Activated CD8-positive, alpha-beta T cell treated with anti-CD3 and anti-CD28 coated beads for 36 hours (primary cell): ENCODE measurements at regions of chr4 and their contacts with region 1.

Region 1: DNA sequence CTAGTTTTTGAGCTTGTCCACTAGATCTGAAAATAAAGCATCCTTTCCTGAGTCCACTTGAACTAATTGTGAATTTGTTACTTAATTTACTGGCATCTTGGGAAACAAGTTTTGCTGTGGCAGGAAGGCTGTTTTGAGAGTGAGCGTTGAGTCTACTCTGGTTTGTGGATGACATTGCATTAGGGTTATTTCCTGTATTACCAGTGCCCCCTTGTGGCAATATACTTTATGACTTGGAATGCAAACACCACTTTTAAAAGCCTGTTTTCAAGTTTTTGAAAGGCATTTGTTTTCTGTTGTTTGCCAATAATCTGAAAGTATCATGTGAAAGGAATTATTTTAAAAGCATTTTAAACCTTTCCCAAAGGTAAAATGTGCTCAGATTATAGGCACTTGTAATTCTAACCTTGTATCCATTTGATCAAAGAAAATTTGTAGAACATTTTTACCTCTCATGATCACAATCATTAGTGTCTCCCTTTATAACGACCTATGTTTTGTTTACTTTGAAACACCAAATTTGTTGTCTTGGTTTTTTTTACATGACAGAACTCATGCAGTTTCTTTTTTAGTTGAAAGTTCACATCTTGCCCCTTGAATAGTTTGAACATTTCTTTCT is 18.0 kb upstream of the CYP2U1 start:
- DNase-seq: peak; percentile 45
- ATAC-seq: peak; percentile 77
- H3K4me3 Mint-ChIP-seq: no peak overlapping the region
- H3K27ac Mint-ChIP-seq: no peak overlapping the region
- H3K4me1 Mint-ChIP-seq: no peaks in the 10 kb centered on the region
- H3K27me3 Mint-ChIP-seq: no peaks in the 10 kb centered on the region
- CTCF ChIP-seq: peak; percentile 72

Region 2: GRCh38 chr4:107564326-107564725 is 349.1 kb before region 1 on chr4:
- CTCF ChIA-PET with region 1: no interaction called
- POLR2A ChIA-PET with region 1: no interaction called
- intact Hi-C with region 1: no loop called
- DNase-seq: no peak
- ATAC-seq: no peak
- H3K4me3 Mint-ChIP-seq: no peak overlapping the region
- H3K27ac Mint-ChIP-seq: no peak overlapping the region
- H3K4me1 Mint-ChIP-seq: no peaks in the 10 kb centered on the region
- H3K27me3 Mint-ChIP-seq: peaks cover 9% of the 10 kb centered on the region
- CTCF ChIP-seq: no peak

Region 3: DNA sequence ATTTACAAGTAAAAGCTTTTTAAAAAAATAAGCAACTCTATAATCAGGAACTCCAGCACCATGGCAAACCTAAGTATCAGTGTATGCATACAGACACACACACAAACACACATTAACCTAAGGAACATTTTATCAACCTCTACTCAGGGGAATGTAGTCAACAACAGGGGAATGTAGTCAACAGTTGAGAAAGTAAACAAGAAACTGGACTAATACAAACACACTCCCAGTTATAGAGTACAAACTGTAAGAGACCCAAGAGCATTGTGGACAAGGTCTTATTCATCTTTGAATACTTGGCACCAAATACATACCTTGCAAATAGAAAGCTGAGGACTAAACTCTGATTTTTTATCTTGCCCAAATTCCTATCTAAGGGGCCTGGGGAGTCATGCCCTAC is 229.5 kb before region 1 on chr4:
- CTCF ChIA-PET with region 1: no interaction called
- POLR2A ChIA-PET with region 1: no interaction called
- intact Hi-C with region 1: no loop called
- DNase-seq: no peak
- ATAC-seq: no peak
- H3K4me3 Mint-ChIP-seq: no peak overlapping the region
- H3K27ac Mint-ChIP-seq: no peak overlapping the region
- H3K4me1 Mint-ChIP-seq: no peaks in the 10 kb centered on the region
- H3K27me3 Mint-ChIP-seq: no peaks in the 10 kb centered on the region
- CTCF ChIP-seq: no peak

Region 4: GRCh38 chr4:107757864-107758476 is 155.4 kb before region 1 on chr4:
- CTCF ChIA-PET with region 1: interaction called, 55 read pairs
- POLR2A ChIA-PET with region 1: no interaction called
- intact Hi-C with region 1: loop called (anchors 1 kb)
- DNase-seq: no peak
- ATAC-seq: no peak
- H3K4me3 Mint-ChIP-seq: no peak overlapping the region
- H3K27ac Mint-ChIP-seq: no peak overlapping the region
- H3K4me1 Mint-ChIP-seq: no peaks in the 10 kb centered on the region
- H3K27me3 Mint-ChIP-seq: peaks cover 11% of the 10 kb centered on the region
- CTCF ChIP-seq: peak; percentile 85

Region 5: GRCh38 chr4:107902715-107903114 is 10.7 kb before region 1 on chr4:
- CTCF ChIA-PET with region 1: interaction called, 18 read pairs
- POLR2A ChIA-PET with region 1: no interaction called
- intact Hi-C with region 1: no loop called
- DNase-seq: no peak
- ATAC-seq: no peak
- H3K4me3 Mint-ChIP-seq: no peak overlapping the region
- H3K27ac Mint-ChIP-seq: no peak overlapping the region
- H3K4me1 Mint-ChIP-seq: no peaks in the 10 kb centered on the region
- H3K27me3 Mint-ChIP-seq: peaks cover 15% of the 10 kb centered on the region
- CTCF ChIP-seq: no peak

Region 6: GRCh38 chr4:108053251-108053711 is 139.9 kb after region 1 on chr4:
- CTCF ChIA-PET with region 1: no interaction called
- POLR2A ChIA-PET with region 1: no interaction called
- intact Hi-C with region 1: no loop called
- DNase-seq: no peak
- ATAC-seq: no peak
- H3K4me3 Mint-ChIP-seq: no peak overlapping the region
- H3K27ac Mint-ChIP-seq: peak overlapping the region; percentile 98
- H3K4me1 Mint-ChIP-seq: peaks cover 87% of the 10 kb centered on the region
- H3K27me3 Mint-ChIP-seq: no peaks in the 10 kb centered on the region
- CTCF ChIP-seq: no peak